ENCODE measurements at regions of chr11 and their contacts with region 1.

Region 1: DNA sequence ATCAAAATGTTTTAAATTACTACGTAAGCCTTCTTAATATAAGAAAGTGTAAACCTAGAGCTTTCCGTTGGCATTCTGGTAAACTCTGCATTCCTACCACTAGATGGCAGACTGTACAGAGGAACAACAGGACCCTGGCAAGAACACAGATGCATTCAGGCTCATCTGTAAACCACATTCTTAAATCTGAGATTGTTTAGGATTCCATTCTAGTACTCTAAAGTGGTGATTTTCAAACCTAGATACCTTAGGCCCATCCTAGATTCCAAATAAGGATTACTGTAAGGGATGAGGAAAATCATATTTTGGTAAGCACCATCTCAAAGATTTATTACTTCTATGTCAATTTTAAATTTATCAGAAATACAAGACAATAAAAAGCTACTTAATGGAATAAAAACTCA is 26.9 kb downstream of the PICALM start:
- DNase-seq: peak; percentile 77
- ATAC-seq: peak; percentile 74
- H3K4me3 ChIP-seq: no peak overlapping the region
- H3K27ac ChIP-seq: no peak overlapping the region
- H3K4me1 ChIP-seq: peaks cover 24% of the 10 kb centered on the region
- H3K27me3 ChIP-seq: no peaks in the 10 kb centered on the region
- CTCF ChIP-seq: peak; percentile 84
- EP300 ChIP-seq: no peak
- POLR2A ChIP-seq: no peak
- RAD21 ChIP-seq: peak; percentile 66

Region 2: DNA sequence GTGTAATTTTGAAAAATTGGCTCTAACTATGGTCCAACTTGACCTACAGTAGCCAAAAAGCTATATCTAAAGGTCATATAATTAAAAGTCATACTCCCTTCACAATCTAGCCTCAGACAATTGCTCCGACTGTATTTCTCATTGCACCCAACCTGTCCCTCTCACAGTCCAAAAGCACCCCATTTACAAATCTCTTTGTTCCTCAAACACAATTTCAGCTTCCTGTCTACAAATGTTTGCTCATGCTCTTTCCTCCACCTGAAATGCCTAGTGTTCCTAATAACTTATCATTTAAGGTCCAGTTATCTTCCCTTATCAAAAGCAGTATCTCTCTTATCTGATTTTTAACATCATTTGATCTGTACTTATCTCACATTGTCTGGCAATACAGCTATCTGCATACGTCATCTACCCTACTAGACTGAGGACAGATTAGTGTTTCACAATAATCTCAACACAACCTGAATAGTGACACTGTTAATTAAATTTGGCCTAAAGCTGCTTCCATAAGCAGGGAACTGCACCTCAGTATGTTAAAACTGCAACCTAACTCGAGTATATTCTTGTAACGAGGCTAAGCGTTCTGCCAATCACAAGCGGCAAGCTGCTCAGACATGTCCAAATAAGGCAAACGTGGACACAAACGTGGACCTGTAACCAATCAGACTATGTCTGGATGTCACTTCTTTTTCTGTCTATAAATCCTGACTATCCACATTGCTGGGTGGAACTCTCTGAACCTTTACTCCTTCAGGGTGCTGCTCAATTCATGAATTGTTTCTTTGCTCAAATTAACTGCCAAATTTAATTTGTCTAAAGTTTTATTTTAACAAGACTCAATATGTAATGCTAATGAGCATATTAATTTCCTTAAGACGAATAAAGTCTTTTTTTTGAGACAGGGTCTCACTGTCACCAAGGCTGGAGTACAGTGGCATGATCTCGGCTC is 11.0 kb after region 1 on chr11:
- CTCF ChIA-PET with region 1: no interaction called
- POLR2A ChIA-PET with region 1: no interaction called
- in situ Hi-C with region 1: no loop called
- intact Hi-C with region 1: loop called (anchors 1 kb)
- DNase-seq: no peak
- ATAC-seq: no peak
- H3K4me3 ChIP-seq: no peak overlapping the region
- H3K27ac ChIP-seq: no peak overlapping the region
- H3K4me1 ChIP-seq: peaks cover 33% of the 10 kb centered on the region
- H3K27me3 ChIP-seq: no peaks in the 10 kb centered on the region
- CTCF ChIP-seq: no peak
- EP300 ChIP-seq: no peak
- POLR2A ChIP-seq: no peak
- RAD21 ChIP-seq: no peak

Region 3: DNA sequence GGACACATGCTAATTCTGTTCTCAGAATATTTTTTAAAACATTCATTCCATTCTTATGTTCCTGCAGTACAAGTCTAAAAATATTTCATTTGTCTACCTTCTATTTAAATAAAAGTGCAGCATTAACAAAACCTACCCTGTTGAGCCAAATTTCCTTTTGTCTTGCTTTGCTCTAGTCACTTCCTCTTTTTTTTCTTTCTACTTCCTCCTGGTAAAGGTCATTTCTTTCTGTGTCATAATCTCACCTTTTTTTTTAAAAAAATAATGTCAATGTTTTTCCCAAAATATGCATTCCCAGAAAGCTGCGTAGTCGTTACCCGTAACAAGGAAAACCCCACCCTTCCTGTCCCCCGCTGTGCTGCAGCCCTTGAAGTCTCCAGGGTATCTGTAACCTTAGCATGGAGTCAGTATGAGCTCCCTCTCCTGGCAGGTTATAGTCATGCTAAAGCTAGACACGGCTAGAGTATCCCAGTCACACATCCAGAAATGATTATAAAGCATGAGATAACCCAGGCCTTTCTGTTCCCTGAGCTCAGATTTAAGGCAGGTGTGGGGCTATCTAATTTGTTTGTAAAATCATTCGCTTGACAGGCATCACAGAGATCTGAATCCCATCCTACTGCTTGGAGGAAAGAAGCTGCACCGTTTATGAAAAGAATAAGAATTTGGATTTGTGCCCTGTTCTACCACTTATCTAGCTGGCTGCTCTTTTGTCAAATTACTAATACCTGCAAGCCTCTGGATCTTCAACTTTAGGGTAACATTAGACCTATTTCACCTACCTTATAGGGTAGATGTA is 151.5 kb after region 1 on chr11:
- CTCF ChIA-PET with region 1: interaction called, 27 read pairs
- POLR2A ChIA-PET with region 1: no interaction called
- in situ Hi-C with region 1: no loop called
- intact Hi-C with region 1: loop called (anchors 1 kb)
- DNase-seq: peak; percentile 76
- ATAC-seq: peak; percentile 100
- H3K4me3 ChIP-seq: peak overlapping the region in 2 of 3 experiments; percentile 21; a peak in 2 of 6 replicates
- H3K27ac ChIP-seq: no peak overlapping the region
- H3K4me1 ChIP-seq: peaks cover 9% of the 10 kb centered on the region; the same call in 1 of the 2 replicates
- H3K27me3 ChIP-seq: no peaks in the 10 kb centered on the region
- CTCF ChIP-seq: peak; percentile 85
- EP300 ChIP-seq: no peak
- POLR2A ChIP-seq: no peak
- RAD21 ChIP-seq: peak; percentile 65; the same call in 1 of the 2 replicates

Region 4: DNA sequence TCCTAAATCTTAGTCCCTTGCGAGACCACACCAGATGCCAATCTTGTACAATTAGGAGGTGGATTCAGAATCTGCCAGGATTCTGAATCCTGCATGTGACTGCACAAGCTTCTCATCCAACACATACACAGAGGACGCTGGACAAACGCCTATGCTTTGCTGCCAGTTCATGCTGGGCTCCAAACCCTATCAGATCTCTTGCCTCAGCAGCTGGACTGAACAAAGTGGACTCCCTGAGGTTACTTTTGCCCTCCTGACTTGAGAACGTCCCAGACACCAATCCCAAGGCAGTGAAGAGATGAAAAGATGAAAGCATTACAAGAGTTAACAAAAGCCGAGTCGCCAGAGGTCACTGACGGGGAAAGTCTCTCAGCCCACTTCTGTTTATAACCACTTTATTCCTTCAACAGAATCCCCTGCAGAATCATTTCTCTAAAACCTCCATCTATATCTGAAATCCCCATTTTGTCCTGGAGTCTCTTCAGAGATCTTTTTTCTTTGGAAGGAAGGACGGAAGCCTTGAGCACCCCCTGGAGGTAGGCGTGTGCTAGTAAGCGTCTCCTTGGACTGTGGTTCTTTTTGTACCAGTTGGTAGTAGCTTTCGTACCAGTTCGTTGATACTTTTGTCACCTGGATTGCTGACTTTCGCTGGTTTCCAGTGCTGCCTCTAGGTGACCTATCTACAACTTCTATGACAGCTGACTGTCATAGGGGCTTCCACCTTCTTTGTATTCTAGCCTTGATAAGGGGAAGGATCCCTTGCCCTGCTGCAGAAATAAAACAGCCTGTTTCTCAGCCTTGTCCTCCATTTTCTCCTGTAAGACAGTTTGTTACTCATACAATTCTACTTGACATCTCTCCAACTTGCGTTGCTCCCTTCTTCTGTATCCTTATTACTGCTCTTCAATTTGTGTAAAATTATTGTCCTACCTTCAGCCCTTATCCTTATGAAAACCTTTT is 176.4 kb after region 1 on chr11:
- CTCF ChIA-PET with region 1: interaction called, 14 read pairs
- POLR2A ChIA-PET with region 1: no interaction called
- in situ Hi-C with region 1: loop called (anchors 25 kb)
- intact Hi-C with region 1: loop called (anchors 1 kb)
- DNase-seq: peak; percentile 64
- ATAC-seq: peak; percentile 96
- H3K4me3 ChIP-seq: peak overlapping the region in 2 of 3 experiments; percentile 24 to 31; a peak in 4 of 6 replicates
- H3K27ac ChIP-seq: no peak overlapping the region
- H3K4me1 ChIP-seq: peaks cover 13% of the 10 kb centered on the region
- H3K27me3 ChIP-seq: no peaks in the 10 kb centered on the region; a peak in 2 of 5 replicates
- CTCF ChIP-seq: peak; percentile 83
- EP300 ChIP-seq: no peak
- POLR2A ChIP-seq: no peak
- RAD21 ChIP-seq: peak; percentile 77

Region 5: GRCh38 chr11:86291466-86292262 is 249.7 kb after region 1 on chr11:
- CTCF ChIA-PET with region 1: no interaction called
- POLR2A ChIA-PET with region 1: no interaction called
- in situ Hi-C with region 1: no loop called
- intact Hi-C with region 1: loop called (anchors 1 kb)
- DNase-seq: peak; percentile 70
- ATAC-seq: peak; percentile 91
- H3K4me3 ChIP-seq: no peak overlapping the region
- H3K27ac ChIP-seq: no peak overlapping the region
- H3K4me1 ChIP-seq: peaks cover 16% of the 10 kb centered on the region
- H3K27me3 ChIP-seq: no peaks in the 10 kb centered on the region
- CTCF ChIP-seq: peak; percentile 63
- EP300 ChIP-seq: 0 out of 4 replicates have a peak, but pooled peaks of 1 of the 2 experiments have one; percentile 12
- POLR2A ChIP-seq: no peak
- RAD21 ChIP-seq: peak; percentile 16; the same call in 1 of the 2 replicates